ENCODE measurements at regions of chr2 and their contacts with region 1.

Region 1: GRCh38 chr2:227374158-227374557 is 4.9 kb downstream of the TM4SF20 start:
- DNase-seq: no peak
- ATAC-seq: peak; percentile 87
- H3K4me3 ChIP-seq: no peak overlapping the region
- H3K27ac ChIP-seq: no peak overlapping the region
- H3K4me1 ChIP-seq: no peaks in the 10 kb centered on the region
- H3K27me3 ChIP-seq: no peaks in the 10 kb centered on the region
- CTCF ChIP-seq: no peak
- EP300 ChIP-seq: peak; percentile 42 to 57; a peak in 2 of 4 replicates
- POLR2A ChIP-seq: no peak
- RAD21 ChIP-seq: no peak

Region 2: GRCh38 chr2:226799181-226799975 is 574.8 kb before region 1 on chr2 and contains the start of gene IRS1:
- CTCF ChIA-PET with region 1: no interaction called
- POLR2A ChIA-PET with region 1: no interaction called
- RAD21 ChIA-PET with region 1: no interaction called
- SMC1A ChIA-PET with region 1: no interaction called
- in situ Hi-C with region 1: no loop called
- intact Hi-C with region 1: no loop called
- DNase-seq: no peak
- ATAC-seq: peak; percentile 53
- H3K4me3 ChIP-seq: peak within 1 kb of the TSS; percentile 93
- H3K27ac ChIP-seq: no peak within 1 kb of the TSS
- H3K4me1 ChIP-seq: peaks cover 8% of the 10 kb centered on the region
- H3K27me3 ChIP-seq: no peaks in the 10 kb centered on the region
- CTCF ChIP-seq: peak in 2 of 3 experiments; percentile 1 to 37; a peak in 2 of 6 replicates
- EP300 ChIP-seq: no peak
- POLR2A ChIP-seq: 0 out of 2 replicates have a peak, but pooled peaks have one; percentile 17
- RAD21 ChIP-seq: peak; percentile 56
- polyA plus RNA-seq, gene IRS1: 0.03 to 0.13 TPM

Region 3: GRCh38 chr2:227147023-227147422 is 227.1 kb before region 1 on chr2:
- CTCF ChIA-PET with region 1: no interaction called
- POLR2A ChIA-PET with region 1: no interaction called
- RAD21 ChIA-PET with region 1: no interaction called
- SMC1A ChIA-PET with region 1: no interaction called
- in situ Hi-C with region 1: no loop called
- intact Hi-C with region 1: no loop called
- DNase-seq: no peak
- ATAC-seq: no peak
- H3K4me3 ChIP-seq: no peak overlapping the region
- H3K27ac ChIP-seq: no peak overlapping the region
- H3K4me1 ChIP-seq: no peaks in the 10 kb centered on the region
- H3K27me3 ChIP-seq: no peaks in the 10 kb centered on the region
- CTCF ChIP-seq: no peak
- EP300 ChIP-seq: no peak
- POLR2A ChIP-seq: no peak
- RAD21 ChIP-seq: no peak

Region 4: DNA sequence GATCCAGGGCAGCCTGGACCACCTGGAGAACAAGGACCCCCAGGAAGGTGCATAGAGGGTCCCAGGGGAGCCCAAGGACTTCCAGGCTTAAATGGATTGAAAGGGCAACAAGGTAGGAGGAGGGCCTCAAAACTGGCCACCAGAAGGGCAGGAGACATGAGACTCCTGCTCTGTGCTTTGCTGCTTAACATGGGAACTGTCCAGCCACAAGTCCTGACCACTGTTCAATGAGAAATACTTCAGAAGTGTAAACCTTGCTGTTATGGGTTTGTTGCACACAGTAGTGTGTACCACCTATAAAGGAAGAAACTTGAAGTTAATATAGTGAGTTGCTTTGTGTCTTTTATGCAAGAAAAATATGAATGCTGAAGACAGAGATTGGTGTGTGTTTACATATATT is 93.3 kb before region 1 on chr2:
- CTCF ChIA-PET with region 1: no interaction called
- POLR2A ChIA-PET with region 1: no interaction called
- RAD21 ChIA-PET with region 1: no interaction called
- SMC1A ChIA-PET with region 1: no interaction called
- in situ Hi-C with region 1: no loop called
- intact Hi-C with region 1: no loop called
- DNase-seq: no peak
- ATAC-seq: peak; percentile 38; the same call in 1 of the 3 replicates
- H3K4me3 ChIP-seq: no peak overlapping the region
- H3K27ac ChIP-seq: no peak overlapping the region
- H3K4me1 ChIP-seq: no peaks in the 10 kb centered on the region
- H3K27me3 ChIP-seq: no peaks in the 10 kb centered on the region
- CTCF ChIP-seq: no peak
- EP300 ChIP-seq: no peak
- POLR2A ChIP-seq: no peak
- RAD21 ChIP-seq: no peak

Region 5: GRCh38 chr2:227351639-227352038 is 22.5 kb before region 1 on chr2:
- CTCF ChIA-PET with region 1: interaction called, 7 read pairs
- POLR2A ChIA-PET with region 1: interaction called, 5 read pairs
- RAD21 ChIA-PET with region 1: interaction called, 3 read pairs
- SMC1A ChIA-PET with region 1: interaction called, 13 read pairs
- in situ Hi-C with region 1: no loop called
- intact Hi-C with region 1: no loop called
- DNase-seq: peak; percentile 37
- ATAC-seq: peak; percentile 96
- H3K4me3 ChIP-seq: 0 out of 2 replicates have a peak overlapping the region, but pooled peaks have one; percentile 20
- H3K27ac ChIP-seq: peak overlapping the region; percentile 73
- H3K4me1 ChIP-seq: no peaks in the 10 kb centered on the region; the same call in 1 of the 2 replicates
- H3K27me3 ChIP-seq: no peaks in the 10 kb centered on the region
- CTCF ChIP-seq: no peak
- EP300 ChIP-seq: no peak
- POLR2A ChIP-seq: no peak
- RAD21 ChIP-seq: no peak

Region 6: DNA sequence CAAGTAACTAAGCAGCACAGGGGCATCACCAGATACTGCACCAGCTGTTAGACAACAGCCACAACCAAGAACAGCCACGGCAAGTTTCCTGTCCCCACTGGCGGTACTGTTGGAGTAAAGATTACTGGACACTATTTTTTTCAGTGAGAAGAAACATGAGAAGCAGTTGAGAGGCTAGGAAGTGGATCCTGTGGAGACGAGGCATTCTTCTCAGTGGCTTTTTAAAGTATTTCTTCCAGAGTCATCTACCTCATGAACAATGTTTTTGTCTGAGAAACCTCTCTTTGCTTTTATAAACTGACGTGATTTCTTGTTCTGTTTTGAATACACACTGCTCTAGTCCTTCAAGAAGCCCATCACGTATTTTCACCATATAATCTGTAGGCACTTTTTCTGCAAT is 13.8 kb before region 1 on chr2:
- CTCF ChIA-PET with region 1: interaction called, 3 read pairs
- POLR2A ChIA-PET with region 1: interaction called, 3 read pairs
- RAD21 ChIA-PET with region 1: interaction called, 3 read pairs
- SMC1A ChIA-PET with region 1: interaction called, 12 read pairs
- in situ Hi-C with region 1: no loop called
- intact Hi-C with region 1: no loop called
- DNase-seq: no peak
- ATAC-seq: no peak
- H3K4me3 ChIP-seq: no peak overlapping the region
- H3K27ac ChIP-seq: no peak overlapping the region
- H3K4me1 ChIP-seq: no peaks in the 10 kb centered on the region
- H3K27me3 ChIP-seq: no peaks in the 10 kb centered on the region
- CTCF ChIP-seq: no peak
- EP300 ChIP-seq: no peak
- POLR2A ChIP-seq: no peak
- RAD21 ChIP-seq: no peak

Region 7: DNA sequence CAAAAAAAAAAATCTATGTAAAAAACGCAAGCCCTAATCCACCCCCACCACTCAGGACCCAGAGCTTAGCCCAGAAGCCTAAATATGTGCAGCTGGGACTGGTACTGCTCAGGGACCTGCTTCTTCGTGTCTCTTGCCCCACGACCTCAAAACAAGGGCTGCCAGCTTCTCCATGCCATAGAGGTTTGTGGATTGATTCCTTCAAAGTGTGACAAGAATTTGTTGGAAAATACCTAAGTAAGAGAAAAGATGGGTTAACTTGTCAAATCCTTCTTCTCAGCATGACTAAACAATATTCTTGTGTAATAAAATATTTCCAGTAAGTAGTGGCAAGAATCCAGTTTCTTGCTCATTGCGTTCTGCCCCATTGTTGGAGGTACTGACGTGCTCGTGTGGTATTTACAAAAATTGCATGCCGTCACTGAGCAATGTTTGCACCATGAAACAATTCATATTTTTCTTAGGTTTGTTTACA is 14.4 kb after region 1 on chr2:
- CTCF ChIA-PET with region 1: interaction called, 4 read pairs
- POLR2A ChIA-PET with region 1: interaction called, 11 read pairs
- RAD21 ChIA-PET with region 1: interaction called, 4 read pairs
- SMC1A ChIA-PET with region 1: interaction called, 13 read pairs
- in situ Hi-C with region 1: no loop called
- intact Hi-C with region 1: no loop called
- DNase-seq: no peak
- ATAC-seq: no peak
- H3K4me3 ChIP-seq: no peak overlapping the region
- H3K27ac ChIP-seq: no peak overlapping the region
- H3K4me1 ChIP-seq: no peaks in the 10 kb centered on the region
- H3K27me3 ChIP-seq: no peaks in the 10 kb centered on the region
- CTCF ChIP-seq: no peak
- EP300 ChIP-seq: no peak
- POLR2A ChIP-seq: no peak
- RAD21 ChIP-seq: no peak